ENCODE measurements at regions of chr1 and their contacts with region 1.

Region 1: DNA sequence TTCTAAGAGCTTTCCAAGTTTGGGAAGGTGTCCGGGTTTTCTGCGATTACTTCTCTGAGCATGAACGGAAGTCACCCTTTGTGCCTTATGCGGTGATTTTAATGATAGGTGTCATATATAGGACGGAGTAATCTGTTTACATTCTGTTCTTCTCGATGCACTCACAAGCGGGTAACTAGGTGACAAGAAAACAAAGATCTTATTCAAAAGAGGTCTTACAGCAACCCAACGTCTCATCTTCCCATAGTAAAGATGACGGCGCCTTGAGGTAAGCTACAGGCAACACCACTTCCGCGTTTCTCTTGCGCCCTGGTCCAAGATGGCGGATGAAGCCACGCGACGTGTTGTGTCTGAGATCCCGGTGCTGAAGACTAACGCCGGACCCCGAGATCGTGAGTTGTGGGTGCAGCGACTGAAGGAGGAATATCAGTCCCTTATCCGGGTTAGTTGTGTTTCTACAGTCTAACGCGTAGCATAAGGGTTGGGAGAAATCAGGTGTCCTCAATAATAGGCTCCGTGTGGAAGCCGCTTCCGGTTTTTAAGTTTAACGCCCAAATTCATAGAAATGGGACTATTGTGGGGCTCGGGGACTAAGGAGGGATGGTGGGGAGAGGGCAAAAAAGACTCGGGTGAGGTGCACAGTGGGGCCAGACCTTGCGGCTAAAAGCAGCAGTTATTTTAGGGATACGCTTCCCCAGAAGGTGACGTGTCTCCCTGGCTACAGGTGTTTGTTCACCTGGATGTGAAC is at the start of gene UFC1:
- DNase-seq: peak; percentile 90
- H3K4me3 Mint-ChIP-seq: peak within 1 kb of the TSS; percentile 90
- H3K27ac Mint-ChIP-seq: peak within 1 kb of the TSS; percentile 99
- H3K4me1 Mint-ChIP-seq: peaks cover 37% of the 10 kb centered on the region
- H3K27me3 Mint-ChIP-seq: no peaks in the 10 kb centered on the region

Region 2: DNA sequence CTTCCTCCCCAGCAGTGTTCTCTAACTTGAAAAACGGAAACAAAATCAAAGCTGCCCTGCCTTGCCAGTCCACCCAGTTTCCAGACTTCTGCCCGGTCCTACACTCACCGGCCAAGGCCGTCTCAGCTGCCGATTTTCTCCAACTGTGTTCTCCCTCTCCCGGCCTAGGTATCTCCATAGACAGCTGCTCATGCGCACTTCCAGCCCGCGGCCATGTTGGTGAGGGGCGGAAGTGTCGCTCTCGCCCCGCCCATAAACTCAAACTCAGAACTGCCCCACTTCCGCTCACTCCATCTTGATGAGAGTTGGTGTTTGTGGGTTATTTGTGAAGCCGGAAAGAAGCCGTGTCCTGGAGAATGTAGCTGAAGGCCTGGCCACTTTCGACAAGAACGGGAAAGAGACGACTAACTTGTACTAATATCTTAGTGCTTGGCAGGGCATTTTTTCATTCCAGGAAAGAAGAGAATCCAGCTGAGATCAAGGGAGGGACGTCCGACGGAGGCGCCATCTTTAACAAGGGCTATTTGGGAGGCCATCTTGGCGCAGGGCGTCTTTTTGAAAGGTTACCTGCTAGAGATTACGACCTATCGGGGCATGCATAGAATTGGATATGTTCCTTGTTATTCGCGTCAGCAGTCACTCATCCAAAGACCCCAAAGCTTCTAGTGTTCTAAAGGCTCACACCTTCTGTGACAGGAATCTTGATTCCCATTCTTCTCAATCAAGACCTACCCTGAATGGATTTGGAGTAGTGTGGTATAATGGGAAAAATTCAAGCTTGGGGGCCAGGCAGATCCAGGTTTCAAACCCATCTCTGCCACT is 107.9 kb before region 1 on chr1 and contains the start of gene USF1:
- CTCF ChIA-PET with region 1: no interaction called
- DNase-seq: peak; percentile 94
- H3K4me3 Mint-ChIP-seq: peak within 1 kb of the TSS; percentile 86
- H3K27ac Mint-ChIP-seq: peak within 1 kb of the TSS; percentile 97
- H3K4me1 Mint-ChIP-seq: peaks cover 57% of the 10 kb centered on the region
- H3K27me3 Mint-ChIP-seq: no peaks in the 10 kb centered on the region

Region 3: DNA sequence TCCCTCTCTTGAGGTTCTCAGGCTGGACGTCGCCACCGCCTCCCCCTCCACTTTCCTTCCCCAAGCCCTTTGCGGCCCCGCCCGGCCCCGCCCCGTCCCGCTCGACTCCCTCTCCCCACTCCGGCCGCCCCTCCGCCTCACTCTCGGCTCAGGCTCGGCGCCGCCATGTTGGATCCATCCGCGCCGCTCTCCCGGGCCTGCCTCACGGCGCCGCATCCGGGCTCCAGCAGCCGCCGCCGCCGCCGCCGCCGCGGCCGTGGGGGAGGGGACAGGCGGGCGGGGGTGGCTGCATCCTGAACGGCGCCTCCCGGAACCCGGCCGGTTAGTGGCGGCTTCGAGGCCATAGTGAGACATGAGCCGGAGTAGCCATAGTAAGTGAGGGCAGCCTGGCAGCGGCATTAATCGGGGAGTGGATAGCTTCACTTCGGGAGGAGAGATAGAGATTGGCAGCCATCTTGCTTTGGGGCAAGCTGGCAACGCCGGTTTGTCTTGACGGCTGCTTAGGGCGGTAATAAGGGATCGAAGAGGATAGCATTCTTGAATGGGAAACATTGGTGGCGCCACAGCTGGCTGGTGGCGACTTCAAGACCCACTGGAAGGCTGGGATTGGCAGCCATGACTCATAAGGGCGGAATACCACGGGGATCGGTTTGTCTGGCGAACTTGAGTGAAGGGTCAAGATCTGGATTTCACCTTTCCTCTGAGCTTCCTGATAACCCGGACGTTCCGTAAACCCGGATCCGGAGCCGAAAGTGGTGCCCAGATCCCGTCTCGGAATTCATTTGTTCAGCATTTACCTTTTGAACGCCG is 21.2 kb before region 1 on chr1 and contains the start of gene DEDD:
- CTCF ChIA-PET with region 1: no interaction called
- DNase-seq: peak; percentile 94
- H3K4me3 Mint-ChIP-seq: no peak within 1 kb of the TSS
- H3K27ac Mint-ChIP-seq: peak within 1 kb of the TSS; percentile 86
- H3K4me1 Mint-ChIP-seq: peaks cover 51% of the 10 kb centered on the region
- H3K27me3 Mint-ChIP-seq: no peaks in the 10 kb centered on the region

Region 4: DNA sequence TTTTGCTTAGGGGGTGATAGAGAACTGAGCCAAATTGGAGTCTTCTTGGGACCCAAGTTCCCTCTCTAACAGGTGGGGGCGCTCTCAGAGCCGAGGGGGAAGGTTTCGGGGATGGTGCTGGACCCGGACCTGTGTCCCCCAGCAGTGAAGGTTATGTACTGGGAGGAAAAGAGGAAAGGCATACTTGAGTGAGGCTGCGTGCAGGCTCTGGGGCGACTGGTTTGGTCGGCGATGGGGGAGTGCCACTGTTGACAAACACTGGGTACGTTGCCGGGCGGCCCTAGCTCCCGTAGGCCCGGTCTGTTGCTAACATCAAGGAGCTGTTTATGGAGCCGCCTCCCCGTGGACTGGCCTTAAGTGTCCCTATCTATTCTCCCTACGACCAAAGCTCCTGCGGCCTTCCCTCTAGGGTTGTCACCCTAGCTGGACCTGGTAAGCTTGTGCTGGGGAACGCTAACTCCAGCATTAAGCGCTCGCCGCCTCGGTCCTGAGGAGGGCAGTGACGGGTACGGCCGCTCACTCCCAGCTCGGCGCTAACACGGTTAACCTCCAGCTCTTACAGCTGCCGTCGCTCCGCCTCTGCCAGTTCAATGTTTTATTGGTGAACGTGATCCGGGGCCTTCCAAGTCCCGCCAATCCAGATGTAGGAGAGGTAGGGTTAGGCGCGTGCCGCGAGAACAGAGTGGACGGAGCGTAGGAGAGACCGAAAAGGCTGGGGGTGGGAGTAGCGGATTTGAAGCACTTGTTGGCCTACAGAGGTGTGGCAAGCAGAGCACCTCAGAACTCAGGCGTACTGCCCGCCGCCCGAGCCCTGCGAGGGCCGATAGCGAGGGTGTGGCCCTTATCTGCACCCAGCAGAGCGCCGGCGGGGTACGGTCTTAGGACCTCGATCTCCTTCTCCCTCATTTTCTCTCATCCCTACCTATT is 12.2 kb after region 1 on chr1 and contains the start of gene PPOX:
- CTCF ChIA-PET with region 1: interaction called, 24 read pairs
- DNase-seq: peak; percentile 97
- H3K4me3 Mint-ChIP-seq: peak within 1 kb of the TSS; percentile 74
- H3K27ac Mint-ChIP-seq: peak within 1 kb of the TSS; percentile 97
- H3K4me1 Mint-ChIP-seq: peaks cover 45% of the 10 kb centered on the region
- H3K27me3 Mint-ChIP-seq: no peaks in the 10 kb centered on the region

Region 5: GRCh38 chr1:161266202-161266601 is 112.3 kb after region 1 on chr1:
- CTCF ChIA-PET with region 1: no interaction called
- DNase-seq: no peak
- H3K4me3 Mint-ChIP-seq: no peak overlapping the region
- H3K27ac Mint-ChIP-seq: no peak overlapping the region
- H3K4me1 Mint-ChIP-seq: peaks cover 7% of the 10 kb centered on the region
- H3K27me3 Mint-ChIP-seq: peaks cover 39% of the 10 kb centered on the region

Measured in activated naive CD4-positive, alpha-beta T cell treated with anti-CD3 and anti-CD28 coated beads, Interleukin-2, amount 10 ng/mL, durations not matched to agents 7 days and 5 days (primary cell).